AG04449 (cell line): ENCODE measurements at regions of chr10 and their contacts with region 1.

Region 1: GRCh38 chr10:106625751-106626150 is 538.8 kb downstream of the SORCS1 start:
- DNase-seq: no peak
- H3K4me3 ChIP-seq: no peak overlapping the region
- CTCF ChIP-seq: no peak

Region 2: DNA sequence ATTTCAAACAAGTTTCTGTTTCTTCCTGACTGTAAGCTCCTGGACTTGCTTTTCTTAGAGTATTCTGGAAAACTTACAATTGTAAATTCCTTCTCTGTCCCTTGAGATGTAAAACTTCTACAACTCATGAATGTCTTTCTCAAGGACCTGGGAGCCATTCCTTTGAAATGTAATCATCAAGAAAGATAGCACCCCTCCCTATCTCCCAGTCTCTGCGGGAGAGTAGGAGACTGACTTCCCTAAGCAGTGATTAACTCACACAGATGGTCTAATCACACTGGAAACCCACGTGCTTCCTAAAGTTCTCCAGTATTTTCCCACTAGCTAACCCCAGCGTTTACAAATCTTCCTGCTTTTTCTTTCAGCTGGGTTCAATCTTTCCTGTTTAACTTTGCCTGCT is 10.7 kb before region 1 on chr10:
- CTCF ChIA-PET with region 1: interaction called, 20 read pairs
- POLR2A ChIA-PET with region 1: no interaction called
- DNase-seq: peak; percentile 78
- H3K4me3 ChIP-seq: no peak overlapping the region
- CTCF ChIP-seq: no peak

Region 3: GRCh38 chr10:106636766-106637491 is 11.2 kb after region 1 on chr10:
- CTCF ChIA-PET with region 1: interaction called, 12 read pairs
- POLR2A ChIA-PET with region 1: no interaction called
- DNase-seq: no peak
- H3K4me3 ChIP-seq: no peak overlapping the region
- CTCF ChIP-seq: no peak

Region 4: GRCh38 chr10:106652279-106652678 is 26.5 kb after region 1 on chr10:
- CTCF ChIA-PET with region 1: no interaction called
- POLR2A ChIA-PET with region 1: no interaction called
- DNase-seq: no peak
- H3K4me3 ChIP-seq: no peak overlapping the region
- CTCF ChIP-seq: no peak